ENCODE measurements at regions of chr3 and their contacts with region 1.

Region 1: GRCh38 chr3:194323785-194324735 is 27.1 kb downstream of the CPN2 start:
- DNase-seq: peak in 8 of 14 experiments; percentile 17 to 68 (median 40)
- ATAC-seq: peak; percentile 83
- H3K4me3 ChIP-seq: peak overlapping the region; percentile 46
- H3K4me3 Mint-ChIP-seq: no peak overlapping the region
- H3K27ac ChIP-seq: no peak overlapping the region
- H3K27ac Mint-ChIP-seq: no peak overlapping the region
- H3K4me1 ChIP-seq: peaks cover 13% of the 10 kb centered on the region
- H3K4me1 Mint-ChIP-seq: no peaks in the 10 kb centered on the region
- H3K27me3 ChIP-seq: no peaks in the 10 kb centered on the region
- H3K27me3 Mint-ChIP-seq: peaks cover 3% of the 10 kb centered on the region
- CTCF ChIP-seq: no peak

Region 2: DNA sequence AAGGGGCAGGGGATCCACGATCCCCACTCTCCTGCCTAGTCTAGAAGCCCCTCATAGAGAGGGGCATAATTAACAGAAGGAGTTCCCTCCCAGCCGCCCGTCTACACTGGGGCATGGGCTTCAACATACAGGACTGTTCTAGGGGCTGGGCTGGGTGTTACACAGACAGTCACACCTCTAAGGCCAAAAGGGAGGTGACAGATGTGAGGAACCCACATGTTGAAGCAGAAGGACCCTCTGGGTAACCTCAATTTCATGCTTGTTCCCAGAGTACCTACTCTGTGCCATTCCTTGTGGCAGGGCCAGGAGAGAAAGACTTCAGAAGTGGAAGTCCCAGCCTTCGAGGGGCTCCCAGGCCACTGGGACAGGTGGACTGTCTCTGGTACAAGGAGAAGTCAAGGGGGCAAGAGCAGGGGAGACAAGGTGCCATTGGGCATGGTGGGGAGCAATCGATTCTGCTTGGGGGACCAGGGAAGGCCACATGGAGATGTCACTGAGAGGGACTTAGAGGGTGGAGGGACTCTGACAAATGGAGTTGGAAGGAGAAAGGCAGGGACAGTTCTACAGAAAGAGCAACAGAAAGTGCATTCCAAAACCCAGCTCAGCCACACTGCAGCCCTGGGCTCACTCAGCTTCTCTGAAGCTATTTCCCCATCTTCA is 44.2 kb before region 1 on chr3:
- CTCF ChIA-PET with region 1: no interaction called
- POLR2A ChIA-PET with region 1: no interaction called
- intact Hi-C with region 1: loop called in 1 of 2 experiments (anchors 1 kb)
- DNase-seq: peak in 1 of 14 experiments; percentile 21
- ATAC-seq: no peak
- H3K4me3 ChIP-seq: no peak overlapping the region
- H3K4me3 Mint-ChIP-seq: no peak overlapping the region
- H3K27ac ChIP-seq: no peak overlapping the region
- H3K27ac Mint-ChIP-seq: no peak overlapping the region
- H3K4me1 ChIP-seq: no peaks in the 10 kb centered on the region
- H3K4me1 Mint-ChIP-seq: no peaks in the 10 kb centered on the region
- H3K27me3 ChIP-seq: no peaks in the 10 kb centered on the region
- H3K27me3 Mint-ChIP-seq: no peaks in the 10 kb centered on the region
- CTCF ChIP-seq: no peak

Region 3: DNA sequence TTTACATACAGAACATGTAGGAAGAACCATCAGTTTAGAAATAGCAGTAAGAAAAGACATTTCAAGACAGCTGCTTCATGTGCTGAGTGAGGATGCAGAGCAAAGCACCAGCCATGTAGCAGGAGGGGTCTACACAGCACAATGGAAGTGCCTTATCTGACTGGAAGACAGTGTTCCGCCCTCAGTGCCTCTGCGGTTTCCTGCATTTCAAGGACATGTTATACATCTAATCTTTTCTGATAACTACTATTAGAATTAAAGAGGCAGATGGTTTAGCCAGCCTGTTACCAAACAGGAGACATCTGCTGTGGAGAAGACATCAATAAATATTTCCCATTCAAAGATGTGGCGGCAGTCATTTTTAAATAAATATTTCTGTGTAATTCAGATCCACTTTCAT is 337.3 kb after region 1 on chr3:
- CTCF ChIA-PET with region 1: no interaction called
- POLR2A ChIA-PET with region 1: no interaction called
- intact Hi-C with region 1: no loop called
- DNase-seq: peak in 1 of 14 experiments; percentile 8
- ATAC-seq: peak; percentile 39
- H3K4me3 ChIP-seq: no peak overlapping the region
- H3K4me3 Mint-ChIP-seq: no peak overlapping the region
- H3K27ac ChIP-seq: no peak overlapping the region
- H3K27ac Mint-ChIP-seq: peak overlapping the region; percentile 9
- H3K4me1 ChIP-seq: peaks cover 8% of the 10 kb centered on the region
- H3K4me1 Mint-ChIP-seq: peaks cover 22% of the 10 kb centered on the region
- H3K27me3 ChIP-seq: no peaks in the 10 kb centered on the region
- H3K27me3 Mint-ChIP-seq: no peaks in the 10 kb centered on the region
- CTCF ChIP-seq: no peak